ENCODE measurements at regions of chr5 and their contacts with region 1.

Region 1: DNA sequence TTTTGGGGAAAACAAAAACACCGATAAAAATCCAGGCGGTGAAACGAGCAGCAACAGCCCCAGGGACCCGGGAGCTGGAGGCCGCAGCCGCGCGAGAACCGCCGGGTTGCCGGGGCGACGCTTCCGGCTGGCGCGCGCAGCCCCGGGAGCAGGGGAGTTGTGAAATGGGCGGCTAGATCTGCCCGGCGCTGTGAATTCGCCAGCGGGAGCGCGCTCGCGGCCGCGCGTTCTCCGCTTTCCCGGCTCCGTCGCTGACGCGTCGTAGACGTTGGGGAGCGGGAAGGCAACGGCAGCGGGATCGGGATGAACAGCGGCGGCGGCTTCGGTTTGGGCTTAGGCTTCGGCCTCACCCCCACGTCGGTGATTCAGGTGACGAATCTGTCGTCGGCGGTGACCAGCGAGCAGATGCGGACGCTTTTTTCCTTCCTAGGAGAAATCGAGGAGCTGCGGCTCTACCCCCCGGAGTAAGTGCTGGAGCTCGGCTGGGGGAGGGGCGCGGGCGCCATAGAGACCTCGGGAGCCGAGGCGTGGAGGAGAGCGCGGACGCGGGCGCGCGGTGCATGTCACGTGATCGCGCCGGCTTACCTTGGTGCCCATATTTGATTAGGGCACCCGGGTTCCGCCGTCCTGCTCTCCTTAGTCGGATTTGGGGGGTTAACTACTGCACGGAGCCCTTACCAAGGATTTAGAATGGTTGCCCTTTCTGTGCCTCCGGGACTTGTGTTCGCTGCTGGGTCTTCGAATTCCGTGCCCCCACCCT is at the start of gene SREK1:
- DNase-seq: peak; percentile 65 to 94
- H3K4me3 ChIP-seq: peak within 1 kb of the TSS; percentile 89 to 92
- H3K27ac ChIP-seq: peak within 1 kb of the TSS; percentile 98 to 100
- H3K4me1 ChIP-seq: peaks cover 0 to 11% of the 10 kb centered on the region in 2 donors
- H3K27me3 ChIP-seq: no peaks in the 10 kb centered on the region
- CTCF ChIP-seq: no peak
- total RNA-seq, gene SREK1: 31.6 TPM

Region 2: GRCh38 chr5:65695162-65695755 is 449.0 kb before region 1 on chr5:
- intact Hi-C with region 1: no loop called
- DNase-seq: no peak
- H3K4me3 ChIP-seq: no peak overlapping the region
- H3K27ac ChIP-seq: no peak overlapping the region
- H3K4me1 ChIP-seq: peaks cover 0 to 5% of the 10 kb centered on the region in 2 donors
- H3K27me3 ChIP-seq: no peaks in the 10 kb centered on the region
- CTCF ChIP-seq: no peak

Region 3: DNA sequence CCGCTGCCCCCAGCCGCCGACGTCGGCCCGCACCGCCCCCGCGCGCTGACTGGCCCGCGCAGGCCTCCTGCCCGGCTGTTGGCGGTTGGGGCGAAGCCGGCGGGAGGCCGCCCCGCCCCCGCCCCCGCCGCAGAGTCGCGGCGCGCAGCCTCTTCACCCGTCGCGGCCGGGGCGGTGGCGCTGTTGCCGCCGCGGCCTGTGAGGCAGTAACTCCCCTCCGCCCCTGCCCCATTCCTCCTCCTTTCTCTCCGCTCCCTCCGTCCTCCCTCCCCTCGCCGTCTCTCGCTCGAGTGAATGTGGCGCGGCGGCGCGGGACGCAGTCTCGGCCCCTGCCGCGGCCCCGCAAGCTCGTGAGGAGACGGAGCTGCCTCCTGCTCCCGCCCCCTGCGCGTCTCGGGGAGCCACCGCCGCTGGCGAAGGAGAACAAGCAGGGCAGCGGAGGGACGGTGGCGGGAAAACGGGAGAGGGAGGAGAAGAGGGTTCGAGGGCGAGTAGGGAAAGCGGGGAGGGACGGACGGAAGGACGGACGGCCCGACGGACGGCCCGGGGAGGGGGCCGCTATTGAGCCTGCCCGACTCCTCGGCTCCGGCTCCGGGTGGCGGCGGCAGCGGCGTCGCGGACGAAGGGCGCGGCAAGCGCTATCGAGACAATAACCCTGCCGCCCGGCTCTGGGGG is 218.5 kb before region 1 on chr5:
- intact Hi-C with region 1: loop called (anchors 1 kb)
- DNase-seq: peak; percentile 18 to 90
- H3K4me3 ChIP-seq: peak overlapping the region; percentile 97 to 99
- H3K27ac ChIP-seq: peak overlapping the region; percentile 98 to 100
- H3K4me1 ChIP-seq: peaks cover 0 to 6% of the 10 kb centered on the region in 2 donors
- H3K27me3 ChIP-seq: no peaks in the 10 kb centered on the region
- CTCF ChIP-seq: peak in 2 of 3 experiments; percentile 28 to 39

Measured in ascending aorta (tissue), 2 donors.